Lower leg skin (tissue), 4 donors: ENCODE measurements at regions of chr16 and their contacts with region 1.

Region 1: DNA sequence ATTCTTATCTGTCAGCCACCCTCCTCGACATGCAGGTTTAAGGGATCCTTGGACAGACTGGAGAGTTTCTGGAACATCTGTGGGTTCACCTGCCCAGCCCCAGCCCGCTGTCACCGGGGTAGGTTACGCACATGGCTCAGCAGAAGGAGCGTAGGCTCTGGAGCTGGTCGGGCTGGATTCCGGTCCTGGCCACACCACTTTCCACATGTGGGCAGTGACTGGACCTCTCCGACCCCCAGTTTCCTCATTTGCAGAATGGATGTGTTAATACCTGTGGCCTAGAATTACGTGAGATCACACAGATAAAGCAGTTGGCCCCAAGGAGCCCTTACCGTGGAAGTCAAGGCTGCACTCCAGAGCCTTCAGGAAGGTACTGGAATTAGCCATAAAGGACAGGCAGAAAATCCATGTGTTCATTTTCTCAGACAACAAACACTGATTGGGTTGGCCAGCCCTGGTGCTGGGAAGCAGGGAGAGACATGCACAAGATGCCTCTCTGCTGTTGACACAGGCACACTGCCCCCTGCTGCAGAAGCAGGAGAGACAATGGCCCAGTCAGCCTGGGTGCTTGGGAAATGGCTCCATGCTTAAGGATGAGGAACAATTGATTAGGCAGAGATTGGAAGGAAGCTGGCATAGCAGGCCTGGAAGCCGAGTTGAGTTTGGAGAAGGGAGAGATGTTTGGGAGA is 58.8 kb downstream of the SF3B3 start:
- DNase-seq: no peak
- H3K4me3 ChIP-seq: no peak overlapping the region
- CTCF ChIP-seq: no peak
- POLR2A ChIP-seq: no peak

Region 2: GRCh38 chr16:70563636-70564035 is 18.8 kb before region 1 on chr16:
- intact Hi-C with region 1: loop called (anchors 1 kb)
- DNase-seq: no peak
- H3K4me3 ChIP-seq: no peak overlapping the region
- CTCF ChIP-seq: no peak
- POLR2A ChIP-seq: no peak